ENCODE measurements at regions of chr14 and their contacts with region 1.

Region 1: GRCh38 chr14:88189417-88190191 is 133.5 kb downstream of the KCNK10 start:
- DNase-seq: peak; percentile 96
- ATAC-seq: peak; percentile 98
- H3K4me3 ChIP-seq: peak overlapping the region; percentile 58
- H3K27ac ChIP-seq: no peak overlapping the region
- H3K4me1 ChIP-seq: 0 out of 2 replicates have a peak, but pooled peaks cover 5% of the 10 kb centered on the region
- H3K27me3 ChIP-seq: peaks cover 17% of the 10 kb centered on the region
- CTCF ChIP-seq: peak; percentile 86

Region 2: GRCh38 chr14:88245321-88245720 is 55.7 kb after region 1 on chr14:
- CTCF ChIA-PET with region 1: no interaction called
- POLR2A ChIA-PET with region 1: no interaction called
- intact Hi-C with region 1: no loop called
- DNase-seq: peak; percentile 23
- ATAC-seq: no peak; the same call in 1 of the 2 replicates
- H3K4me3 ChIP-seq: no peak overlapping the region
- H3K27ac ChIP-seq: no peak overlapping the region
- H3K4me1 ChIP-seq: 0 out of 2 replicates have a peak, but pooled peaks cover 4% of the 10 kb centered on the region
- H3K27me3 ChIP-seq: peaks cover 7% of the 10 kb centered on the region
- CTCF ChIP-seq: no peak

Region 3: DNA sequence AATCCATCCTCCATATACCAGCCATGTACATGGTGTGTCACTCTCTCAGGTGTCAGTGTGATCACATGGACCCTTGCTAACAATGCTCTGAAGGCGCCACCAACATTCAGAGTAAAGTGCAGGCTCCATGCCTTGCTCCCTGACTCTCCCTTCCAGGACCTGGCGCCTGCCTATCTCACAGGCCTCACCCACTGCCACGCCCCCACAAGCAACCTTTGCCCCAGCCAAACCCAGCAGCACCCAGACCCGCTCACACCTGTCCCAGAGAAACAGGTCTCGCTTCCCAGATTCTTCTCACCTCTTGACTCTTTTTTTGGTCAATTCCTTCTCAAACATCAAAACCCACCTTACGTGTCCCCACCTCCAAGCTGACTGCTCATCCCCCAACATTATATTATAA is 81.2 kb after region 1 on chr14:
- CTCF ChIA-PET with region 1: no interaction called
- POLR2A ChIA-PET with region 1: no interaction called
- intact Hi-C with region 1: no loop called
- DNase-seq: no peak
- ATAC-seq: no peak
- H3K4me3 ChIP-seq: no peak overlapping the region
- H3K27ac ChIP-seq: no peak overlapping the region
- H3K4me1 ChIP-seq: no peaks in the 10 kb centered on the region
- H3K27me3 ChIP-seq: 0 out of 2 replicates have a peak, but pooled peaks cover 9% of the 10 kb centered on the region
- CTCF ChIP-seq: no peak

Region 4: GRCh38 chr14:88380405-88380804 is 190.8 kb after region 1 on chr14:
- CTCF ChIA-PET with region 1: interaction called, 81 read pairs
- POLR2A ChIA-PET with region 1: no interaction called
- intact Hi-C with region 1: loop called (anchors 1 kb)
- DNase-seq: peak; percentile 61
- ATAC-seq: peak; percentile 63
- H3K4me3 ChIP-seq: no peak overlapping the region
- H3K27ac ChIP-seq: no peak overlapping the region
- H3K4me1 ChIP-seq: peaks cover 9% of the 10 kb centered on the region; the same call in 1 of the 2 replicates
- H3K27me3 ChIP-seq: no peaks in the 10 kb centered on the region
- CTCF ChIP-seq: peak; percentile 73

Region 5: DNA sequence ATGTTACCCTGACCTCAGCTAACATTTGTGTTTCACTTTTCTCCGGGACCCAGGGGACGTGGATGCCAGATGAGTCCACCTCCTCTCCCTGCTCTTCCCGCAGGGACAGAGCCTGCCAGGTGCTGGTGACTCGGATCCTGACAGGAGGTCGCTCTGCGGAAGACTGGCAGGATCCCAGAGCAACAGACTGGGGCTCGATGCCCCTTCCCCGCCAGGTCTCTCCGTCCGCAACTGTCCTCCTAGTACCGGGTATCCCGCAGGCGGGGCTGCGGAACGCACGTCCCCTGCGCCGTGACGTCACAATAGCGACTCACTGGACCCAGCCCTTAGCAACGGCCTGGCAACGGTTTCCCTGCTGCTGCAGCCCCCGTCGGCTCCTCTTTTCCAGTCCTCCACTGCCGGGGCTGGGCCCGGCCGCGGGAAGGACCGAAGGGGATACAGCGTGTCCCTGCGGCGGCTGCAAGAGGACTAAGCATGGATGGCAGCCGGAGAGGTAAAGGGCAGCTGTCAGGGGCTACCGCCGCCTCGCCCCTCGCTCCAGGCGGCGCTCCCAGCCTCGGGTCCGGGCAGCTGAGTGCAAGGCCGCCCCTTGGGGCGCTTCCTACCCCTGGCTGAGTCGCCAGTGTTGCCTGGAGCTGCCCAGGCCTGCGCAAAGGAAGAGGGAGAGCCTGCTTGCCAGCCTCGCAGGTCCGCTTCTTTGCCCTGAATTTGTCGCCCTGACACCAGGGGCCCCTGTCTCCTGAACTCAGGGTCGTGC is 195.9 kb after region 1 on chr14 and contains the start of gene SPATA7:
- CTCF ChIA-PET with region 1: interaction called, 81 read pairs
- POLR2A ChIA-PET with region 1: no interaction called
- intact Hi-C with region 1: loop called (anchors 1 kb)
- DNase-seq: peak; percentile 93
- ATAC-seq: peak; percentile 97
- H3K4me3 ChIP-seq: peak within 1 kb of the TSS; percentile 95
- H3K27ac ChIP-seq: no peak within 1 kb of the TSS
- H3K4me1 ChIP-seq: peaks cover 10% of the 10 kb centered on the region
- H3K27me3 ChIP-seq: no peaks in the 10 kb centered on the region
- CTCF ChIP-seq: 0 out of 2 replicates have a peak, but pooled peaks have one; percentile 20
- total RNA-seq, gene SPATA7: 2.8 and 3.9 TPM in 2 replicates

Region 6: DNA sequence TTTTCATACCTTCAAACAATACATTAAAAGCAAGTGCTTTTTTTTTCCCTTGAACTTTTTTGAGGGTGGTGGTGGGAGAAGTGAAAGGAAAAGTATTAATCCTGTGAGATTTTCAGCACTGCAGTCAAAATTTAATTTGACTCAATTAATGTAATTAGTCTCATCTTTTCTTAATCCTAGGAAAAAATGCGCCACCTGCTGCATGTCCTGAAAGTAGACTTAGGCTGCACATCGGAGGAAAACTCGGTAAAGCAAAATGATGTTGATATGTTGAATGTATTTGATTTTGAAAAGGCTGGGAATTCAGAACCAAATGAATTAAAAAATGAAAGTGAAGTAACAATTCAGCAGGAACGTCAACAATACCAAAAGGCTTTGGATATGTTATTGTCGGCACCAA is 248.1 kb after region 1 on chr14:
- CTCF ChIA-PET with region 1: interaction called, 3 read pairs
- POLR2A ChIA-PET with region 1: no interaction called
- intact Hi-C with region 1: loop called (anchors 1 kb)
- DNase-seq: peak; percentile 25
- ATAC-seq: no peak
- H3K4me3 ChIP-seq: no peak overlapping the region
- H3K27ac ChIP-seq: no peak overlapping the region
- H3K4me1 ChIP-seq: peaks cover 4% of the 10 kb centered on the region
- H3K27me3 ChIP-seq: no peaks in the 10 kb centered on the region
- CTCF ChIP-seq: peak; percentile 74